HEK293T (cell line): ENCODE measurements at regions of chr2 and their contacts with region 1.

Region 1: GRCh38 chr2:218876562-218877219 is 4.0 kb upstream of the WNT10A start:
- DNase-seq: peak; percentile 75

Region 2: DNA sequence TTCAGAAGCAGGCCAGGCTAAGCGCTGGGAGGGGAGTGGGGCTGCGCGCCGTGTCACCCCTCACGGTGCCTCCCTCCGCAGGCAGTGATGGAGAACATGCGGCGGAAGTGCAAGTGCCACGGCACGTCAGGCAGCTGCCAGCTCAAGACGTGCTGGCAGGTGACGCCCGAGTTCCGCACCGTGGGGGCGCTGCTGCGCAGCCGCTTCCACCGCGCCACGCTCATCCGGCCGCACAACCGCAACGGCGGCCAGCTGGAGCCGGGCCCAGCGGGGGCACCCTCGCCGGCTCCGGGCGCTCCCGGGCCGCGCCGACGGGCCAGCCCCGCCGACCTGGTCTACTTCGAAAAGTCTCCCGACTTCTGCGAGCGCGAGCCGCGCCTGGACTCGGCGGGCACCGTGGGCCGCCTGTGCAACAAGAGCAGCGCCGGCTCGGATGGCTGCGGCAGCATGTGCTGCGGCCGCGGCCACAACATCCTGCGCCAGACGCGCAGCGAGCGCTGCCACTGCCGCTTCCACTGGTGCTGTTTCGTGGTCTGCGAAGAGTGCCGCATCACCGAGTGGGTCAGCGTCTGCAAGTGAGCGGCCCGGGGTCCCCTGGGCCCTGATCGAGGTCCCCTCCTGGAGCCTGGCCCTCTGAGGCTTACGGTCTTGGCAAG is 16.1 kb after region 1 on chr2:
- CTCF ChIA-PET with region 1: interaction called, 71 read pairs
- POLR2A ChIA-PET with region 1: interaction called, 3 read pairs
- DNase-seq: peak; percentile 61

Region 3: DNA sequence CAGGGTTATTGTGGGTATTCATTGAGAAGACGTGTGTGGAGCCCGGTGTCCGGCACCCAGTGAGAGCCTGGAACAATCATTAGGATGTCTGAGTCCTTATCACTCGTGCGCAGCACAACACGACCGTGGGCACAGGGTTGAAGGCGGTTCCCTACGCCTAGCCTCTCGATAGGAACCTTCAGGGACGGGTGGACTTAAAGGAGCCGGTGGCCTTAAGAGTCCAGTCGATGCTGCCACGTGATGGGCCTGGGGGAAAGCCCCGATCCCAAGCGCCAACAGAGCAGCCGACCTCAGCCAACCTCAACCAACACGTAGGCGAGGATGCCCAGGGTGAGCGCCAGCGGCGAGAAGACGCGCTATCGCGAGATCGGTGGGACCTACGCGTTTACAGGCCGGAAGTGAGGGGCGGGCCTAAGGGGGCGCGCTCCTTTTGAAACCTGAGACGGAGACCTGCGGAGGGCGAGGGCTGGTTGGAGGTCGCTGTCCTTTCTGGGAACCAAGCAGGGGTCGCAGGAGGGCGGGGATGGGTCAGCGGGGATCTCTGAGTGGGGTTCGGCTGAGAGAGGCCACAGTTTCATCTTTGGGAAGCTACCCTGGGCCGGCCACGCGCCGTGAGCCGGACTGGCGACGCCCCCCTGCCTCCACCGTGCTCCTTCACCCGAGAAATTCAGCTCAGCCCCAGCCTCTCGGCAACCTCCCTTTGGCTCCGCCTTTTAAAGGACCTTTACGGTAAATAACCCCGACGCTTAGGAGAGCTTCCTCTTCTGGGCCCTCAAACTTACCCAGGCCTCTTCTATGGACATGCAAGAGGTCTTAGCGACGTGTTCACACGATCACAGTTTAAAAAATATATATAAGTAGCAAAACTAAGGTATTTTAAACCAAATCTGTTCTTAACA is 32.3 kb after region 1 on chr2:
- CTCF ChIA-PET with region 1: interaction called, 10 read pairs
- POLR2A ChIA-PET with region 1: interaction called, 11 read pairs
- DNase-seq: peak; percentile 95

Region 4: GRCh38 chr2:219045937-219046550 is 169.4 kb after region 1 on chr2:
- CTCF ChIA-PET with region 1: no interaction called
- POLR2A ChIA-PET with region 1: no interaction called
- DNase-seq: peak; percentile 65